Mammary epithelial cell (primary cell): ENCODE measurements at regions of chr15 and their contacts with region 1.

Region 1: DNA sequence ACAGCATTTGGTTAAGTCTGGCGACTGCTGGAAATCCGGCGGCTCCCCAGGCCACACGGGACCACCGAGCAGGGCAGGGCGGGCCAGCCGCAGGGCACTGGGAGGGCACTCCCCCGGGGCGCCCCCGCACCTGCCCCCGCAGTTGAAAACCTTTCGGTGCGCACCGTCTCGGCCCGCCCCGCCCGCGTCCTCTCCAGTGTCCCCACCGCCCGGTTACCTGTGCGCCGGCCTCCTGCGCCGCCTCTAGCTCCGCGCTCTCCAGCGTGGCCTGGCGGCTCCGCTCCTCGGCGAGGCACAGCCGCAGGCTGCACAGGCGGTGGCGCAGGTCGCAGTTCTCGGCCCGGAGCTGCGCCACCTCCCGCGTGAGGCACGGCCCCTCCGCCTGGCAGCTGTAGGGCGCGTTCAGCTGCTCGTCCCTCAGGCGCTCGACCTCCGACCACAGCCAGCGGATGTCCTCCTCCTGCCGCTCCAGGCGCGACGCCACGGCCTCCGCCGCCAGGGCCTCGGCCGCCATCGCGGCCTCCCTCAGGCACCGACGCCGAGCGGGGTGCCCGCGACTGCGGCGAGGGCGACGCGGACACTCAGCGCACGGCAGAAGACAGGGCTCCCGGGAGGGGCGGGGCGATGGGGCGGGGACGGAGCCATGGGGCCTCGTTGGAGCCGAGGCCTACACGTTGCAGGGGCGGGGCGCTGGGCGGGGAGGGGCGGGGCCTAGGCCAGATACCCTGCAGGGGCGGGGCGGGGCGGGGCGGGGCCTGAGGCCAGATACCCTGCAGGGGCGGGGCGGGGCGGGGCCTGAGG is at the start of gene TARS3:
- DNase-seq: peak; percentile 84
- H3K4me3 ChIP-seq: peak within 1 kb of the TSS; percentile 83 to 94 (median 83)
- H3K27ac ChIP-seq: peak within 1 kb of the TSS; percentile 55
- H3K4me1 ChIP-seq: peaks cover 5% of the 10 kb centered on the region
- H3K27me3 ChIP-seq: no peaks in the 10 kb centered on the region
- CTCF ChIP-seq: peak in 1 of 2 donors; percentile 34
- total RNA-seq, gene TARS3: 9.4 to 10.2 TPM

Region 2: DNA sequence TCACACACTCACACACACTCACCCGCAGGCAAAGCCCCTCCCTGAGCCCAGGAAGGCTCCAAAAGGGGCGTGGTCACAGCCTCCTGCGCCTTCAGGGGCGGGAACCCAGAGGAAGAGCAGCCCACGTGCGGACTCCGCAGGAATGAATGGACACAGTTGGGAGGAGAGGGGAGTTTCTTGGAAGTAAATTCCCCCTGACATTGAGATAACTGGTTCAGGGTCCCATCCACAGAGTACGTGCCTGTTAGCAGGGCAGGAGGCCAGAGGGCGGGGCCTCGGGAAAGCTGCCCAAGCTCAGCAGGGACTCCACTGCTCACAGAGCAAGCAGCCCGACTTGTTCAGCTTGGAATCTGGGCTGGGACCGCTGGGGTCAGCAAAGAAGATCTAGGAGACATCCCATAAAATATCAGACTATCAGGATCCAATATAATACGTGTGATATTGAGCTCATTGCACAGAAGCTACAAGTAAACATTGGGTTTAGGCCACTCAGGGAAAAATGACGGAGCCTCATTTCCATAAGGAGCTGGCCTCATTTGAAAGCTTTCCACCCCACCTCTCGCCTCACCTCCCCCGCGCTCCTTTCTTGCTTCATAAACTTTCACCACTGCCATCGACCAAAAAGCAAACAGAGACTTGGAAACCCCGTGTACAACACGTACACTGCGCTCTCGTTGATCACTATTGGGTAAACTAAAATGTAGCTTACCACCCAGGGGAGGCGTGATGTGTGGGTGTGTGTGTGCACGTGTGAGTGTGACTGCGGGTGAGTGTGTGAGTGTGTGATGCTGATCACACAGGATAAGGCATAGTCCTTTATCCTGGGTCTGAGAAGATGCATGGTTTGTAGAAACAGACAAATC is 107.9 kb before region 1 on chr15:
- CTCF ChIA-PET with region 1: no interaction called
- dilution Hi-C with region 1: no loop called
- in situ Hi-C with region 1: no loop called
- intact Hi-C with region 1: no loop called
- DNase-seq: peak; percentile 48
- H3K4me3 ChIP-seq: no peak overlapping the region
- H3K27ac ChIP-seq: no peak overlapping the region
- H3K4me1 ChIP-seq: no peaks in the 10 kb centered on the region
- H3K27me3 ChIP-seq: peaks cover 2% of the 10 kb centered on the region
- CTCF ChIP-seq: no peak

Region 3: DNA sequence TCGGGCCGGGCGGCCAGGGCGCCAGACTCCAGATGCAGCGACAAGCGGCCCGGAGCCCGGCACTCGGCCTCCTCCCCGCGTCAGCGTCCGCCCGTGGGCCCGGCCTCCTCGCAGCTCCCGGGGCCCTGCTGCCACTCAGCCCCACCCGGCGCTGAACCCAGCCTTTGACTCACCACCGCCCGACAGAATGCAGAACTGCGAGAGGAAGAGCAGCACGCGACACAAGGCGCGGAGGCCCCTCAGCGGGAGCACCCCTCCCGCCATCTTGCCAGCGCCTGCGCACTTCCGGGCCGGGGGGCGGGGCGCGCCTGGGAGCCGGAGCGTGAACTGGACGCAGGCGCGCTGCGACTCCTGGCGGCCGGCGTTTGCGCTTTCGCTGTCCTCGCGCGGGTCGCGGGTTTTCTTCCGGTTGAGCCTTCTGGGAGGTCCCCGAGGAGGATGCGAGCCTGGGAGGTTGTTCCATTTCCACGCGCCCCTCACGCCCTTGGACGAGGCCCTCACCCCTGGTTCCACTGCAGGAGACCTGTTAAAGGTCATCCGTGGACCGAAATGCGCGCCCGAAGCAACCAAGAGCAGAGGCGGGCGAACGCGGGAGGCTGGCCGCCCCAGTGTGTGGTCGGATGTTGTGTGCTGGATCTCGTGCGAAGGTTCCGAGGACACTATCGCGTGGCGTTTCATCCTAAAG is 71.8 kb before region 1 on chr15 and contains the start of gene TM2D3:
- CTCF ChIA-PET with region 1: no interaction called
- dilution Hi-C with region 1: no loop called
- in situ Hi-C with region 1: no loop called
- intact Hi-C with region 1: loop called (anchors 2 kb)
- DNase-seq: peak; percentile 92
- H3K4me3 ChIP-seq: peak within 1 kb of the TSS; percentile 88 to 99 (median 98)
- H3K27ac ChIP-seq: peak within 1 kb of the TSS; percentile 88
- H3K4me1 ChIP-seq: peaks cover 17% of the 10 kb centered on the region
- H3K27me3 ChIP-seq: no peaks in the 10 kb centered on the region
- CTCF ChIP-seq: peak; percentile 53 to 81
- total RNA-seq, gene TM2D3: 27.7 to 36.0 TPM

Region 4: GRCh38 chr15:101684384-101684783 is 39.7 kb before region 1 on chr15:
- CTCF ChIA-PET with region 1: no interaction called
- dilution Hi-C with region 1: no loop called
- in situ Hi-C with region 1: no loop called
- intact Hi-C with region 1: loop called (anchors 5 kb)
- DNase-seq: peak; percentile 94
- H3K4me3 ChIP-seq: no peak overlapping the region
- H3K27ac ChIP-seq: peak overlapping the region; percentile 6
- H3K4me1 ChIP-seq: peaks cover 10% of the 10 kb centered on the region
- H3K27me3 ChIP-seq: no peaks in the 10 kb centered on the region
- CTCF ChIP-seq: no peak

Region 5: DNA sequence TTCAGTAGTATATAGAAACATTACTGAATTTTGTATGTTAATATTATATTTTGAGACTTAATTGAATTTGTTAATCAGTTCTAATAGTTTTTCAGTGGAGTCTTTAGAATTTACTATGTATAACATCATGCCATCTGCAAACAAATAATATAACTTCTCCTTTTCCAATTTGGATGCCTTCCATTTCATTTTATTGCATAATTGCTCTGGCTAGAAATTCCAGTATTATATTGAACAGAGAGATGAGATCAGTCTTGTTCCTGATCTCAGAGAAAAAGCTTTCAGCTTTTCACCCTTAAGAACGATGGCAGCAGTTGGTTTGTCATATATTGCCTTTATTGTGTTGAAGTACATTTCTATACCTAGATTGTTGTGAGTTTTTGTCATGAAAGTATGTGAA is 128.3 kb after region 1 on chr15:
- CTCF ChIA-PET with region 1: no interaction called
- dilution Hi-C with region 1: no loop called
- in situ Hi-C with region 1: no loop called
- intact Hi-C with region 1: no loop called
- DNase-seq: no peak
- H3K4me3 ChIP-seq: no peak overlapping the region
- H3K27ac ChIP-seq: no peak overlapping the region
- H3K4me1 ChIP-seq: no peaks in the 10 kb centered on the region
- H3K27me3 ChIP-seq: no peaks in the 10 kb centered on the region
- CTCF ChIP-seq: no peak